Left lung (tissue), 14 donors: ENCODE measurements at regions of chr10 and their contacts with region 1.

Region 1: DNA sequence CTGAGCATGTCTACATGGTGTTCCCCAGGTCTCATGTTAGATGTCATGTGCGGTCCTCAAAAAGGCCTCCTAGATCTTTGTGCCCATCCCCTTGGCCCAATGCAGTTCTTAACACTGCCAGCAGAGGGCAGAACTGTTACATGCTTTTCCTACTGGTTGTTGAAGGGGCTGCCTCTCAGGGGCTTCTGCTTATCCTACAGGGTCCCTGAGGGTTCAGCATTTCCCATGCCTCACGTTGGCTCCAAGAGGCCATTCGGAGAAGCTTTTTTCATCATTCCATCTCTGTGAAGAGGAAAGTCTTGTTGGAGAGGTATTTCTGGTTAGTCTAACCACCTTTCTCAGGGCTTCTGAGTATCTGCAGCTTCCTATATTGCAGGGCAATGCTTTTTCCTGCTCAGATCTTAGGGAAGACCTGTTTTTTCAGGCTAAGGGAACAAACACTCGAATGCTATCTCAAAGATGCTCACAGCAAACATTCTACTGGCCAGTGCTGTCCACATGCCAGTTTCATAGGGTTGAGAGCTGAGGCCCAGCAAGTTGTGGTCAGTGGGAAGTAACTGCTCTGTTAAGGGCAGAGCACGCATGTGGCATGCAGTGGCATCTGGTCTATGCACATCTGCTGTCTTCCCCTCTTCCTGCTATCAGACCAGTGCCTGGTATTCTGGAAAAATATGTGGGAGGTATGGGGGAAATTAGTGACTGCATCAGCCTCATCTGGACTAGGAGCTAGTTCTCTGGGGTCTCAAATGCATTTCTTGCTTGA is 31.5 kb downstream of the MBL2 start:
- DNase-seq: peak in 1 of 4 donors; percentile 49
- ATAC-seq: peak; percentile 73
- H3K4me3 ChIP-seq: no peak overlapping the region
- H3K27ac ChIP-seq: no peak overlapping the region
- H3K4me1 ChIP-seq: no peaks in the 10 kb centered on the region
- H3K27me3 ChIP-seq: no peaks in the 10 kb centered on the region
- CTCF ChIP-seq: peak; percentile 78 to 95

Region 2: GRCh38 chr10:51879238-51879637 is 861.9 kb before region 1 on chr10:
- intact Hi-C with region 1: no loop called
- DNase-seq: no peak
- ATAC-seq: peak; percentile 87
- H3K4me3 ChIP-seq: no peak overlapping the region
- H3K27ac ChIP-seq: peak overlapping the region; percentile 14 to 53
- H3K4me1 ChIP-seq: no peaks in the 10 kb centered on the region
- H3K27me3 ChIP-seq: no peaks in the 10 kb centered on the region
- CTCF ChIP-seq: no peak

Region 3: DNA sequence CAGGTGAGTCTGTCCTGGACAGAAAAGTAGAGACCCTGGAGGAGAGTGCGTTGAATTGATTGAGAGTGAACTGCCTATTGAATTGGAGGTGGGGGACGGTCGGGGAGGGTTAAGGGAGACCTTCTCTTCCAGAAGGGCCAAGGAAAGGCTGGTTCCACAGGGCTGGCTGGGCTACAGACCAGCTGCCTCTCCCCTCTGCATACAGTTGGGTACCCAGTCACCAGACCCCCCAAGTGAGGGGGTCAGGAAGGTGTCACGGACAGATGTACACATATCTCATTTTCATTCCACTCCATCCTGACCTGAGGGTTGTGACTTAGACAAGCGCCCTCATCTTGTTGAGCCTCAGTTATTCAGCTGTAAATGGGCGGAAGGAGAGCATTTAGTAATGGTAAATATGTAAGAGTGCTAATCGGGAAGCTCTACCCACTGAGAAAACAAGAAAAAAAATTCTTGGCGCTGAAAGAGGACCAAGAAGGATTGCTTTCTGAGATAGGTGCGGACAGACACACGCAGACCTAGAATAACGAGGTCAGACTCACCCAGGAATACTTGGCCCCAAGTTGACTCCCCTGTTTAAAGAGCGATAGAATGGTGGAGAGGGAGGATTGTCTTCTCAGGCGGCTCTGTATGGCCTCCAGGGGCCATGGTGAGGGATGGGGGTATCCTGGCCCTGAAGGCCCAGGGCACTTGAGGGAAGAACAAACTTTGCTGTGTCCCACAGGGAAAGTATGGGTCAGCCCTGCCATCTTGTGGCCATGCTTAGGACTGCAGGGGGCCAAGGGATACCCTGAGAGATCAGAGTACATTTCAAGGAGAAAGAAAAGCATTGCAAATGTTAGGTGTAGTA is 38.7 kb after region 1 on chr10:
- intact Hi-C with region 1: loop called in 1 of 2 experiments (anchors 5 kb)
- DNase-seq: peak; percentile 50 to 75 (median 64)
- ATAC-seq: peak; percentile 96
- H3K4me3 ChIP-seq: no peak overlapping the region
- H3K27ac ChIP-seq: no peak overlapping the region
- H3K4me1 ChIP-seq: no peaks in the 10 kb centered on the region
- H3K27me3 ChIP-seq: peaks cover 0 to 21% of the 10 kb centered on the region in 2 donors
- CTCF ChIP-seq: peak; percentile 83 to 96